ENCODE measurements at regions of chr15 and their contacts with region 1.

Region 1: DNA sequence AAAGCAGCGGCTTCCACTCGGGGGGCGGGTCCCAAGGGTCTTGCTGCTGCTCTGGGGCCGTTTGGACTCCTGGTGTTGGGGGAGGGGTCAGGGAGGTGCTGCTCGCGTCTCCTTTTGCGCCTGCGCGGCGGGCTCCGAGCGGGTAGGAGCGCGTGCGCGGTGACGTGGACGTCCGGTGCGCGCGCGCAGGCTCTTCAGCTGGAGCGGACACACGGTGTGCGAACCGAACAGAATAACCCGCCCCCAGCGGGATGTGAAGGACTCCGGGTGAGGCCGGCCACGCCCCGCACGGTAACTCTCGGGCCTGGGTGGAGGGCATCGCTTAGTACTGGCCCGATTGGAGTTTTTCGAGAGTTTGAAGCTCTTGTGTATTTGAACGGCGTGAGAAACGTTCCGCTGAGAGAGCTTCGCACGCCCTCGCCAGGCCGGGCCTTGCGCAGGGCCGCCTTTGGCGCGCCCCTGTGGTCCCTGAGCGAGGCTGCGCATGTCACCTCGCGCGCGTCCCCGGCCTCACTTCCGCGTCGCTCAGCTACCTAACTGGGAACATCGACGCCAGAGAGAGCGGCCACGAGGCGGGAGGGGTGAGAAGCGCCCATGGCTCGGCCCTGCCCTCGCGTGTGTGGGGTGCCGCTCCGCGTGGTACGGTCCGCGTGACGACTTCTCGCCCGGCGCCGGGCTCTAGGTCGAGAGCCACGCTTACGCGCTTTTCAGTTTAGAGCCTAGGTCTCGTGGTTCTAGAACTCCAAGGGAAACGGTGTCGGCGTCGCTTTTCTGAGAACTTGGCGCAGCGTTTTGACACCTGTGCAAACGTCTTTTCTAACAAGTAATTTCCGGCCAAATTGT is at the start of gene MGA:
- DNase-seq: peak; percentile 67 to 97 (median 78)

Region 2: DNA sequence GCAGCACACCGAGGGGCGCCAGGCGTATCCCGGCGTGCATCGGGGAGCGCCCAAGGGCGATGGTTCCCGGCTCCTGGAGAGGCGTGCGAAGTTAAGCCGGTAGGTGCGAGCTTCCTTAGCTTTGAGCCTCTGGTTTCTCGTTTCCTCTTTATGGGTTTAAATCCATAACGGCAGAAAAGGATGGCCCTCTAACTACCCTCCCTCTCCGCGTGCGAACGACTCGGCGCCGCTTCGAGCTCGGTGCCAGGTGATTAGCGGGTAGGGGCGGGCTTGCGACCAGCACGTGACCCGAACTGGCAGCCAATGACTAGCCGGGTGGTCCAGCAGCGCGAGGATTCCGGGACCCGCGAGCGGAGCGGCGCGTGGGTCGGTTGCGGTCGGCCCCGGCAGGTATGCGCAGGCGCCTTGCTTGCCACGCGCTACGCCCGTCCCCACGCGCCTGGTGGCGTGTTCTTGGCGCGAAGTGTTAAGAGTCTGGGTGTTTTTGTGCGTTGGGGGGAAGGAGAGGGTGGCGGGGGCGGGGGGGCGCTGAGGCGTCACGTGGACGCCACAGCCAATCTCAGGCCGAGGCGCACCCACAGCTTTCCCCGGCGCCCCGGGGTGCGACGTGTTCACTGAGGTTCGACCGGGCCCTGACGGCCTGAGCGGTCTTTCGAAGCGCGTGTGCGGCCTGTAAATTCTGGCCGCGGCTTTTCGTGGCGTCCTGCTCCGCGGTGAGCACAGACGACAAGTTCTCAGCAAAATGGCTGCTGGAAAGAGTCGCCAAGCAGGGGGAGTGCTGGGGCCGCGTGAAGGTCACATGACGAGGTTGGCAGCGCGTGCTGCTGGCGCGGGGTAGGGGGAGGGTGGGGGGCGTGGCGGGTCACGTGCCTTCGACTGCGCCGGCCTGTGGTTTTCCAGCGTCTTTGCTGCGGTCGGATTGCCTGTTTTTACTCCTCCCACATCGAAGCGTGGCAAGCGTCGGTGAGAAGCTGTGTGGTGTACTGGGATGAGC is 39.0 kb before region 1 on chr15:
- intact Hi-C with region 1: loop called (anchors 2 kb)
- DNase-seq: peak; percentile 79 to 97 (median 86)